ENCODE measurements at regions of chr3 and their contacts with region 1.

Region 1: DNA sequence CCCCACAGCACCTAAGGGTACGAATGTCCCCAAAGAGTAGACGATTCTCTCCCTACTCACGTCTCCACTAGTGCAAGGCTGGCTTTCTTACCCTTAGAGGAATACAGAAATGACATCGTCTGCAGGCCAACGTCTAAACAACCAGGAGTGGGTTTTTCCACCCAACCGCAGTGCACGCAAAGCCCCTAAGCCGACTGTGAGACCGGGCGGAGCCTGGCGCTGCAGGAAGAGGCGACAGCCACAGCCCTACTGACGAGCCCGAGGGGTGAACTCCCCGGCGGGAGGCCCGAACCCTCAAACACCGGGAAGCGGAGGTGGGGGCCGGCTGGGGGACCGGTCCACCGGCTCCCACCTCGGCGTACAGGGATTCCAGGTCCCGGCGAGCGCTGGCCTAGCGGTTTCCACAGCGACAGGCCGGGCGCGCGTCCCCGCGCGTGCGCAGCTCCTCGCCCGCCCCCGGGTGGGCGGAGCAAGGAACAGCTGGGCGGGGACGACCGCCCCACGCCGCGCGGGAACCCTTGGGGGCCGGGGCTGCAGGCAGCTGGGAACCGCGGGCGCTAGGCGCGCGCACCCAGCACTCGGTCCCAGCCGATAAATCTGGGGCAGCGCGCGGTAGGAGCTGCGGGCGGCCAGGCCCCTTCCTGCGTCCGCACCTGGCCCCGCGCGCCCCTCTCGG is at the starts of genes CEP19 and PIGX:
- DNase-seq: peak; percentile 66 to 68
- ATAC-seq: peak; percentile 94
- H3K4me3 ChIP-seq: peak within 1 kb of the TSS; percentile 72 to 100 (median 82)
- H3K27ac ChIP-seq: peak within 1 kb of the TSS; percentile 84 to 93 (median 90)
- H3K4me1 ChIP-seq: peaks cover 14 to 20% of the 10 kb centered on the region in 2 donors
- H3K27me3 ChIP-seq: no peaks in the 10 kb centered on the region
- CTCF ChIP-seq: peak; percentile 13 to 52 (median 41)
- POLR2A ChIP-seq: peak; percentile 81 to 88
- total RNA-seq, gene CEP19: 0.62 to 4.1 (median 1.4) TPM
- total RNA-seq, gene PIGX: 13.2 to 35.1 (median 28.8) TPM

Region 2: GRCh38 chr3:197292083-197292646 is 580.2 kb after region 1 on chr3:
- in situ Hi-C with region 1: no loop called
- intact Hi-C with region 1: loop called (anchors 5 kb)
- DNase-seq: peak; percentile 54 to 56
- ATAC-seq: peak; percentile 92
- H3K4me3 ChIP-seq: peak overlapping the region in 1 of 4 donors; percentile 2
- H3K27ac ChIP-seq: peak overlapping the region; percentile 73 to 87 (median 84)
- H3K4me1 ChIP-seq: peaks cover 53 to 64% of the 10 kb centered on the region in 2 donors
- H3K27me3 ChIP-seq: no peaks in the 10 kb centered on the region
- CTCF ChIP-seq: no peak
- POLR2A ChIP-seq: no peak

Measured in gastrocnemius medialis (tissue), 4 donors.